ENCODE measurements at regions of chr1 and their contacts with region 1.

Region 1: DNA sequence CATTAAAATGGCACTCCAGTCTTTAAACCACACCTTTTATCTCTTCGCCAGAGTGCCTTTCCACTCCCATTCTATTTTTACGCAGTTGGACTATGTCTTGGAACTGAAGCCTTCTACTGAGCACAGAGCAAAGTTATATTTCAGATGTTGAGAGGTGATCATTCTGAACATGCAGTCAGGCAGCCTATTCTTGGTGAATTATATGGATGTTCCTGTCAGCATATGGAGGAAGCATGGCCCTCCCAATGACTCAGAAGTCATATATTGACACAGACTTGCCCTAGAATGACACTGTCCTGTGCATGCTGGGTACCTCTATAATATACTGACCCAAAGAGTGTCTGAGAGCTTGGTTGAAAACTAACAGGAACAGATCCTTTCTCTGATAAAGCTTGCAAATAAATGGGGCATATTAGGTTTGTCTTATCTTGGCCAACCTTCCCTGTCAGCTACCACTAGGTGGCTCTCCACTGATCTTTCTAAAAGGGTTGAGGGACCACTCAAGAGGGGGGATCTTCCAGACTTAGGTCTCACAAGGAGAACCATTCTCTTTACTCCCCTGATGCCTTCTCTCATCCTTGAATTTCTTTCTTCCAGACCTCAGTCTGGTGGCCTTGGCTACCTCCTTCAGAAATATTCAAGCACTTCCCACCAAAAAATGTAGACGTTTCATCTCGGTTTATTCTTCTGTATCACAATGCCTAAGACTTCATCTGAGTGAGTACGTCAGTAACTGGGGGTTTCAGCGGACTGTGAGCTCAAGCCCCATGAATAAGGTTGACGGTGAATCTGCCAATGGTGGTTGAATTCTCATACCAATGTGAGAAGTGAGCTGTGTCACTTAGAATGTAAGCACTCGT is 11.8 kb upstream of the ALG14 start:
- DNase-seq: no peak
- ATAC-seq: peak; percentile 59

Region 2: GRCh38 chr1:95233737-95234500 is 149.4 kb after region 1 on chr1 and contains the start of gene RWDD3:
- intact Hi-C with region 1: loop called (anchors 10 kb)
- DNase-seq: peak; percentile 96
- ATAC-seq: peak; percentile 98
- total RNA-seq, gene RWDD3: 25.9 TPM

Measured in sciatic nerve (tissue), 2 donors.